ENCODE measurements at regions of chr12 and their contacts with region 1.

Region 1: DNA sequence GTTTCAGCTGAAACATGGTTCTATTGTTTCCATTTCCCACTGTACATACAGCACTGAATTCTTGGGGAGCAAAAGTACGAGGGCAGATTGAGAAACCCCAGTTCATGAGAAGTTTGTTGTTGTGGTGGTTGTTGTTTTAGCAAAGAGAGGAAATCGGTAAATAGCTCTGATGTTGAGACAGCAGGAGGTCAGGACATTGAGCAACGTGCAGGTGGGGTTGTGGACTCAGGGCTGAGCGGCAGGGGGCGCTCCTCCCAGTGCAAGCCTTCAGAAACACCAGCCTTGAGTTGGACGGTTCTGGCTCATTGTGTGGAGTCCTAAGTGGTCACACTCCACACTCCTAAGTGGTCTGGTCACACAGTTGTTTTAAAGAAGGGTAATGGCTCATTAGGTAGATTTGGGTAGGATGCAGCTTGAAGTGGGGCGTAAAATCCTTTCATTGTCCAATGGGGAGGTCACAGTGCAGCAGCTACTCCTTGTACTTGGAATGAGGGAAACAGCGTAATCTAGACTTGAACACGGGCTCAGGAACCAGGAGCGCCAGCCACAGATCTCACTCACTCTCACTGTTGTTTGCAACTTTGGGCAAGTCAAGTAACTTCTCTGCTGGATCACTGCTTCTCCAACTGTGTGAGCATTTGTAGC is 14.5 kb upstream of the PWP1 start:
- DNase-seq: peak; percentile 83
- H3K4me3 Mint-ChIP-seq: no peak overlapping the region
- H3K27ac Mint-ChIP-seq: peak overlapping the region; percentile 8
- H3K4me1 Mint-ChIP-seq: peaks cover 6% of the 10 kb centered on the region
- H3K27me3 Mint-ChIP-seq: peaks cover 18% of the 10 kb centered on the region

Region 2: DNA sequence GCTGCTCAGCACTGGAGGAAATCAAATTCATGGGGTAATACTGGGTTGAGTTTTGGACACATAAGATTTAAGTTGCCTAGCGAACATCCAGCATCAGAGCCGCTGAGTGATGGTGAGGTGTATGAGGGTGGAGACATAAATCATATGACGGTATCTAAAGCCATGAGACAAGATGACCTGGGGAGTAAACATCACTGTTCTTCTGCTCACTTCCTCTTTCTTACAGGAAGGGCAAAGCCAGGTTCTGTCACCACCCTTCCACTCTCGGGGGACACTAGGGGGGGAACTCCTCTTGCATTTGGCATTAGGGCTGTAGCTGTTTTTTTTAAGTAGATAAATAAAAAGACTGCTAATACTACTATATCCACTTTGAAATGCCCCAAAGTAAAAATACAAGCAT is 65.8 kb after region 1 on chr12:
- intact Hi-C with region 1: no loop called
- DNase-seq: no peak
- H3K4me3 Mint-ChIP-seq: no peak overlapping the region
- H3K27ac Mint-ChIP-seq: no peak overlapping the region
- H3K4me1 Mint-ChIP-seq: peaks cover 5% of the 10 kb centered on the region
- H3K27me3 Mint-ChIP-seq: no peaks in the 10 kb centered on the region

Region 3: DNA sequence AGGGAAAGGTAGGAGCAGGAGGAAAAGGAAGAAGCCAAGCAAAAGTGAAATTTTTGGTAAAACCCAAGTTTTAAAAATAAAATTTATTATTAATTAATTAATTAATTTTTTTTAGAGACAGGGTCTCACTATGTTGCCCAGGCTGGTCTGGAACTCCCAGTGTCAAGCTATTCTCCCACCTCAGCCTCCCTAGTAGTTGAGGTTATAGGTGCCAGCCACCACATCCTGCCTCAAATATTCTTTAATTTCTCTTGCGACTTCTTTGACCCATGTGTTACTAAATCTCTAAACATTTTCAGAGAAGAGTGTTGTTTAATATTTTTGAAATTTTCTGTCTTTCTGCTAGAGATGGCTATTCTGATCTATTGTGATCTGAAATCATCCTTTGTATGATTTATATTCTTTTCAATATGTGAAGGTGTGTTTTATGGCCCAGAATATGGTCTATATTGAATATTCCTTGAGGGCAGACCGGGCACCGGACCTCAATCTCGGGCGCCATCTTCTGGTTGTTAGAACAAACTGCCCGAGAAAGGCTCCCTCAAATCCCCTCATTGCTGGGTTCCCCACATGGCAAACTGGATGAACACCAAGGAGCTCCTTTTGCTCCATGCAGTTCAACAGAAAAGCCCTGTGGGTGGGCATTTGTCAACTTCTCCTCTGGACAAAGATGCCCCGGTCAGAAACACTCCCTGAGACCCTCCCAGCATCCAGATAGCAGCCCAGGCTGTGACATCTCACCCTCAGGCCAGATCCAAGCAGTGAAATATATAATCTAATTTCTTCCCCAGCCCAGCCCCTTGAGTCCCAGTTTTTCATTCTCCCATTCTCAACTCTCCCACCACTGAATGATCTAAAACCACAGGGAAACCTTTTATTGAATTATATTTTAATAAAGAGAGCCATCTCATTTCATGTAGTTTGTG is 213.9 kb after region 1 on chr12:
- intact Hi-C with region 1: loop called (anchors 1 kb)
- DNase-seq: peak; percentile 81
- H3K4me3 Mint-ChIP-seq: no peak overlapping the region
- H3K27ac Mint-ChIP-seq: no peak overlapping the region
- H3K4me1 Mint-ChIP-seq: no peaks in the 10 kb centered on the region
- H3K27me3 Mint-ChIP-seq: peaks cover 23% of the 10 kb centered on the region

Region 4: GRCh38 chr12:108193917-108194316 is 522.8 kb after region 1 on chr12:
- intact Hi-C with region 1: loop called (anchors 10 kb)
- DNase-seq: peak; percentile 63
- H3K4me3 Mint-ChIP-seq: no peak overlapping the region
- H3K27ac Mint-ChIP-seq: no peak overlapping the region
- H3K4me1 Mint-ChIP-seq: no peaks in the 10 kb centered on the region
- H3K27me3 Mint-ChIP-seq: no peaks in the 10 kb centered on the region

Measured in activated CD4-positive, alpha-beta T cell treated with anti-CD3 and anti-CD28 coated beads, Interleukin-2, amount 10 ng/mL, durations not matched to agents 24 days and 14 days (primary cell).